ENCODE measurements at regions of chr19 and their contacts with region 1.

Region 1: GRCh38 chr19:2528543-2529212 is 52.8 kb downstream of the GADD45B start:
- DNase-seq: no peak
- H3K4me3 ChIP-seq: no peak overlapping the region
- CTCF ChIP-seq: no peak
- POLR2A ChIP-seq: no peak

Region 2: GRCh38 chr19:2507109-2507508 is 21.6 kb before region 1 on chr19:
- intact Hi-C with region 1: loop called (anchors 1 kb)
- DNase-seq: no peak
- H3K4me3 ChIP-seq: no peak overlapping the region
- CTCF ChIP-seq: no peak
- POLR2A ChIP-seq: no peak

Measured in lower leg skin (tissue), 4 donors.